Heart left ventricle (tissue), 16 donors: ENCODE measurements at regions of chr3 and their contacts with region 1.

Region 1: DNA sequence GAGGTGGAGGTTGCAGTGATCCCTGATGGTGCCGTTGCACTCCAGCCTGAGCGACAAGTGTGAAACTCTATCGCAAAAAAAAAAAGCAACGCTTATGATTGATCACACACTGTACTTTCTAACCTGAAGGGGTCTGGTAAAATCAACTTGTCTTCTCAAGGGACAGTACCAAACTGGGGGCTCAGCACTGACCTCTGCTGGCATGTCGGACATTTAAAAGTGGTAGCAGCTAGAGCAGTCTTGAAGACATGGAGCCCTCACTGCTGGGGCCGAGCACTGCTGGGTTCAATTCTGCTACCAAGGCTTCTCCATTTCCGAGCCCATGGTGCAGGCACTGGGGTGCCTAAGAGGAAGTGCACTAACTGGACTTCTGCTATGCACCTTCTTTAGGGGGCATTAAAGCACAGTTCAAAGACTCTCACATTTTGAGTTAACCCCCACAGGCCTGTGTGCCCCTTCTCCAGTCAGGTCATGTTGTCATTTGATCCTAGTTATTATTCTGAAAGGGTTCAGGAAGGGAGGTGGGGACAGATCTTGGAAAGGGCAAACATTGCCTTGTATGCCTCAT is 26.4 kb upstream of the LAMP3 start:
- DNase-seq: peak in 2 of 5 donors; percentile 33
- ATAC-seq: peak in 3 of 4 donors; percentile 29 to 49 (median 49)
- H3K4me3 ChIP-seq: no peak overlapping the region
- H3K27ac ChIP-seq: no peak overlapping the region
- H3K4me1 ChIP-seq: peaks cover 0 to 19% (median 0%) of the 10 kb centered on the region in 12 donors
- H3K27me3 ChIP-seq: no peaks in the 10 kb centered on the region
- CTCF ChIP-seq: peak in 10 of 12 donors; percentile 18 to 52 (median 41)
- POLR2A ChIP-seq: no peak

Region 2: GRCh38 chr3:183122257-183122932 is 66.6 kb before region 1 on chr3:
- intact Hi-C with region 1: loop called in 7 of 10 experiments (anchors 5 kb)
- DNase-seq: no peak
- ATAC-seq: peak in 3 of 4 donors; percentile 34 to 57 (median 49)
- H3K4me3 ChIP-seq: no peak overlapping the region
- H3K27ac ChIP-seq: no peak overlapping the region
- H3K4me1 ChIP-seq: peaks cover 0 to 3% (median 0%) of the 10 kb centered on the region in 12 donors
- H3K27me3 ChIP-seq: peaks cover 0 to 9% (median 0%) of the 10 kb centered on the region in 9 donors
- CTCF ChIP-seq: peak; percentile 69 to 91 (median 82)
- POLR2A ChIP-seq: no peak

Region 3: GRCh38 chr3:183377307-183377959 is 188.5 kb after region 1 on chr3:
- intact Hi-C with region 1: loop called in 8 of 10 experiments (anchors 1 to 2 kb)
- DNase-seq: no peak
- ATAC-seq: no peak
- H3K4me3 ChIP-seq: no peak overlapping the region
- H3K27ac ChIP-seq: no peak overlapping the region
- H3K4me1 ChIP-seq: peaks cover 0 to 36% (median 0%) of the 10 kb centered on the region in 12 donors
- H3K27me3 ChIP-seq: no peaks in the 10 kb centered on the region
- CTCF ChIP-seq: no peak
- POLR2A ChIP-seq: no peak

Region 4: GRCh38 chr3:183385698-183386613 is 197.0 kb after region 1 on chr3:
- intact Hi-C with region 1: loop called in 9 of 10 experiments (anchors 1 to 2 kb)
- DNase-seq: peak in 2 of 5 donors; percentile 27 to 46
- ATAC-seq: peak in 3 of 4 donors; percentile 83 to 89 (median 87)
- H3K4me3 ChIP-seq: no peak overlapping the region
- H3K27ac ChIP-seq: no peak overlapping the region
- H3K4me1 ChIP-seq: peaks cover 0 to 16% (median 0%) of the 10 kb centered on the region in 12 donors
- H3K27me3 ChIP-seq: no peaks in the 10 kb centered on the region
- CTCF ChIP-seq: peak; percentile 59 to 80 (median 70)
- POLR2A ChIP-seq: no peak